Activated B cell treated with CpG ODN at 0.5 μM for 24 hours (primary cell): ENCODE measurements at regions of chr14 and their contacts with region 1.

Region 1: GRCh38 chr14:64510825-64511671 is 6.5 kb downstream of the ZBTB1 start:
- DNase-seq: no peak
- ATAC-seq: peak; percentile 36
- H3K4me3 Mint-ChIP-seq: peak overlapping the region; percentile 1
- H3K27ac Mint-ChIP-seq: peak overlapping the region; percentile 51
- H3K4me1 Mint-ChIP-seq: peaks cover 86% of the 10 kb centered on the region
- H3K27me3 Mint-ChIP-seq: no peaks in the 10 kb centered on the region
- CTCF ChIP-seq: peak; percentile 88

Region 2: DNA sequence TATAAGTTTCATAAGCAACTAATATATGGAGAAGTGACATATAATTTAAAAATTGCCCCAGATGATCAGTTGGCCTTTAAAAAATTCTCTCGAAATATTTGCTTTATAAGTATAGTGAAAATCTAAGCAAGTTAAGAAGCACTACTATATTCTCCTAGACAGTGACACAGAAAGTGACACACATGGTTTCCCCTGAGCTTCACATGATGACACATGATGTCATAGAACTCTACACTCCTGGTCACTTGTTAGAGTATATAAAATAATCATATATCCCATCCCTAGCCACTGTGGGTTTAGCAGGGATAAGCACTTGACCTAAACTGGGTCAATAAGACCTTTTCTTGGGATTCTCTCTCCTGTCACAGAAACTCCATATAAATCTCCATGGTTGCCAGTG is 165.5 kb before region 1 on chr14:
- CTCF ChIA-PET with region 1: interaction called, 41 read pairs
- POLR2A ChIA-PET with region 1: interaction called, 4 read pairs
- intact Hi-C with region 1: loop called (anchors 1 kb)
- DNase-seq: no peak
- ATAC-seq: no peak
- H3K4me3 Mint-ChIP-seq: no peak overlapping the region
- H3K27ac Mint-ChIP-seq: no peak overlapping the region
- H3K4me1 Mint-ChIP-seq: peaks cover 6% of the 10 kb centered on the region
- H3K27me3 Mint-ChIP-seq: no peaks in the 10 kb centered on the region
- CTCF ChIP-seq: no peak

Region 3: GRCh38 chr14:64423987-64424386 is 87.1 kb before region 1 on chr14:
- CTCF ChIA-PET with region 1: interaction called, 33 read pairs
- POLR2A ChIA-PET with region 1: no interaction called
- intact Hi-C with region 1: no loop called
- DNase-seq: no peak
- ATAC-seq: no peak
- H3K4me3 Mint-ChIP-seq: no peak overlapping the region
- H3K27ac Mint-ChIP-seq: no peak overlapping the region
- H3K4me1 Mint-ChIP-seq: no peaks in the 10 kb centered on the region
- H3K27me3 Mint-ChIP-seq: no peaks in the 10 kb centered on the region
- CTCF ChIP-seq: no peak

Region 4: GRCh38 chr14:64434528-64434927 is 76.5 kb before region 1 on chr14:
- CTCF ChIA-PET with region 1: interaction called, 33 read pairs
- POLR2A ChIA-PET with region 1: interaction called, 5 read pairs
- intact Hi-C with region 1: loop called (anchors 1 kb)
- DNase-seq: no peak
- ATAC-seq: no peak
- H3K4me3 Mint-ChIP-seq: no peak overlapping the region
- H3K27ac Mint-ChIP-seq: no peak overlapping the region
- H3K4me1 Mint-ChIP-seq: no peaks in the 10 kb centered on the region
- H3K27me3 Mint-ChIP-seq: no peaks in the 10 kb centered on the region
- CTCF ChIP-seq: no peak

Region 5: DNA sequence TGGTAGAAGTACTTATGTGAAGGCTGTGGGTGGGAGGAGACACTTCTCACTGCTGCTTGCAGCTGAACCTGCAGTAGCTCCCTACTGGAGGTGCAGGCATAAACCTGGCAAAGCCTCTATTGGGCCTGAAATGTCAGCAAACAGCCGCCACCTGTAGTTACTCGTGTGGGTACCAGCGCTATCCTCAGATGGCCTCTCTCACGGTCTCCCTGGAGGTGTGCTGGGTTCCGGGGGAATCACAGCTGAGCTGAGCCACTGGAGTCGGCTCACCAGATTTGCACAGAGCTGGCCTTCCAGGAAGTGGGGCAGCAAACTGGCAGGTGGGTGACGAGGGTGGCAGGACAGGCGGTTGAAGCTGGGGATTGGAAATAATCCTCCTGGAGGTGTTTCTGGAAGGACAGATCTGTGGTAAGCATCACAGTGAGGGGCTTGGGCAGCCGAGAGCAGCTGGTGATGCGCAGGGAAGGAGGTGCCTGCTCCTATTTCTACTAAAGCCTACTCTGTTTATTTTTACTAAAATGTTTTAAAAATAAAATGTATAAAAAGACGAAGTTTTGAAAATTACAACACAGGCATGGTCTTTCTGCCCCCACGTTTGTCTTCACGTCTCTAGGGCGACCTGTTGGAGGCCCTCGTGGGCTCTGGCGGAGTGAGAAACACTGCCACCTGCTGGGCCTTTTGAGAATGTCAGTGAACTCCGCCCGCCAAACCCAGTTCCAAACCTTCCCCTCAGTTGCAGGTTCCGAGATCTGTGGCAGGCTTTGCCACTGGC is 125.3 kb after region 1 on chr14:
- CTCF ChIA-PET with region 1: interaction called, 7 read pairs
- POLR2A ChIA-PET with region 1: no interaction called
- intact Hi-C with region 1: loop called (anchors 1 kb)
- DNase-seq: peak; percentile 54
- ATAC-seq: peak; percentile 93
- H3K4me3 Mint-ChIP-seq: no peak overlapping the region
- H3K27ac Mint-ChIP-seq: no peak overlapping the region
- H3K4me1 Mint-ChIP-seq: peaks cover 7% of the 10 kb centered on the region
- H3K27me3 Mint-ChIP-seq: no peaks in the 10 kb centered on the region
- CTCF ChIP-seq: peak; percentile 32